Vagina (tissue), 2 donors: ENCODE measurements at regions of chr5 and their contacts with region 1.

Region 1: DNA sequence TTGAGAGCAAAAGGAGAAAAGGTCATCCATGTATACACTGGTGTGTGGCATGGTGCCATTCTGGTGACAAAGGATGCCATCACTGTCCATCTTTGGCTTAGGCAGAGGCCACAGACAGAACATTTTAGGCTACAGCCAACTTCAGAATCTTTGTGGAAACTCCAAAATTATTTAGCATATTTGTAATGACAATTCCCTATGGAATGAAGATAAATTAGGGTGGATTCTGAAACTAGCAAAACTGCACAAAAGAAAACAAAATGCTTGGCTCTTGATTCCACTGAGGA is 92.5 kb downstream of the FBXW11 start:
- DNase-seq: no peak
- H3K4me3 ChIP-seq: no peak overlapping the region
- H3K27ac ChIP-seq: no peak overlapping the region
- H3K4me1 ChIP-seq: peaks cover 24% of the 10 kb centered on the region
- H3K27me3 ChIP-seq: no peaks in the 10 kb centered on the region
- CTCF ChIP-seq: no peak
- POLR2A ChIP-seq: no peak

Region 2: DNA sequence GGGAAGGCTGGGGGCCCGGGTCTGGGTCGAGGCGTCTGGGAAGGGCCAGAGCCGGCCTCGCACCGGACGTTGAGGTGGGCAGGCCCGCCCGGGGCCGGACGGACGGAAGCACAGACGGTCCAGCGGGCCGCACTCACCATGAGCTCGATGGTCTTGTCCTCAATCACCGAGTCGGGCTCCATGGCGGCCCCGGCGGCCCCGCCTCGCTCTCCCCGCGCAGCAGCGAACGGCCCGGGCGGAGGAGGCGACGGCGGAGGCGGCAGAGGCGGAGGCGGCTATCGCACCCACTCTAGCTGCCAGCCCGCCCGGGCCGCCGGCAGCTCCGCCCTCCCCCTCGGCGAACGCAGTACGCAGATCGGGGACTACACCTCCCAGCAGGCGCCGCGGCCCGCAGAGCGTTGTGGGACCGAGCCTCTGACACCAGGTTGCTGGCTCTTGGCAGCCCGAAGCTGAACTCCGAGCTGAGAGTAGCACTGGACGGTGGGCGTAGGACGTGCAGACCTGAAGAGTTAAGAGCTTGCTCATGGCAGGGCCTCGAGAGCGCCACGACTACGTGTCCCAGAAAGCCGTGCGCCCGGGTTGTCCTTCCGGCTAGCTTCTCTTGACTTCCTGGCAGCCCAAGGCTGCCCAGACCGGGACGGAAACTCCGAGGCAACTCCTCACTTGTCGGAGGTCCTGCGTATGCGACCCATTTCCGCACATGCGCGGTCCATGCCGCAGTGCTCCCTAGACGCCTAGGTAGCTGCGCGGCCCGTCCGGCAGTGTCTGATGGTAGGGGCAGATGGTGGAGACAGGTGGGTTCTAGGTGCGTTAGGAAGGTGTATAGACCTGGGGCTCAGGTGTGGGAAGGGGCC is 92.6 kb after region 1 on chr5 and contains the start of gene FBXW11:
- intact Hi-C with region 1: loop called (anchors 10 kb)
- DNase-seq: peak; percentile 97 to 98
- H3K4me3 ChIP-seq: peak within 1 kb of the TSS; percentile 84 to 94
- H3K27ac ChIP-seq: peak within 1 kb of the TSS; percentile 93
- H3K4me1 ChIP-seq: peaks cover 50% of the 10 kb centered on the region
- H3K27me3 ChIP-seq: no peaks in the 10 kb centered on the region
- CTCF ChIP-seq: no peak
- POLR2A ChIP-seq: peak in 1 of 2 donors; percentile 82
- total RNA-seq, gene FBXW11: 40.5 TPM

Region 3: GRCh38 chr5:172044631-172045314 is 130.8 kb after region 1 on chr5:
- intact Hi-C with region 1: loop called (anchors 10 kb)
- DNase-seq: no peak
- H3K4me3 ChIP-seq: no peak overlapping the region
- H3K27ac ChIP-seq: no peak overlapping the region
- H3K4me1 ChIP-seq: no peaks in the 10 kb centered on the region
- H3K27me3 ChIP-seq: no peaks in the 10 kb centered on the region
- CTCF ChIP-seq: no peak
- POLR2A ChIP-seq: no peak